Posterior cingulate gyrus (tissue), 11 donors: ENCODE measurements at regions of chr5 and their contacts with region 1.

Region 1: GRCh38 chr5:143403593-143404415 is at the start of gene NR3C1:
- DNase-seq: peak; percentile 67 to 97 (median 80)

Region 2: GRCh38 chr5:142922223-142922952 is 481.4 kb before region 1 on chr5:
- intact Hi-C with region 1: loop called (anchors 5 kb)
- DNase-seq: no peak

Region 3: DNA sequence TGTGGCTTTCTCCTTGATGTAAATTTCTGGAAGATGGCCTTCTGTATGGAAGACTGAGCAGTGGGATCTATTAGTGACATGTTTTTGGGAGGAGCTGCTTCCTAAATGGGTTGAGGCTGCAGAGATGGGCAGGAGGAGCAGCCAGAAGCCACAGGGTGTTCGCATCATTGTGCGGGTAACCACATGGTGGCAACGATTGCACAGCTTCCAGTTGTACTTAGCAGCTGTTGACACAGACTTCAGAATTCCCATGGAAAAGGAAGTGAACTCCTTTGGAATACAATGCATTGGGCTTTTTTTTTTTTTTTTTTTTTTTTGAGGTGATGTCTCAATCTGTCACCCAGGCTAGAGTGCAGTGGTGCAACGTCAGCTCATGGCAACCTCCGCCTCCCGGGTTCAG is 297.6 kb before region 1 on chr5:
- intact Hi-C with region 1: loop called (anchors 10 kb)
- DNase-seq: peak in 7 of 10 donors; percentile 35 to 86 (median 56)

Region 4: DNA sequence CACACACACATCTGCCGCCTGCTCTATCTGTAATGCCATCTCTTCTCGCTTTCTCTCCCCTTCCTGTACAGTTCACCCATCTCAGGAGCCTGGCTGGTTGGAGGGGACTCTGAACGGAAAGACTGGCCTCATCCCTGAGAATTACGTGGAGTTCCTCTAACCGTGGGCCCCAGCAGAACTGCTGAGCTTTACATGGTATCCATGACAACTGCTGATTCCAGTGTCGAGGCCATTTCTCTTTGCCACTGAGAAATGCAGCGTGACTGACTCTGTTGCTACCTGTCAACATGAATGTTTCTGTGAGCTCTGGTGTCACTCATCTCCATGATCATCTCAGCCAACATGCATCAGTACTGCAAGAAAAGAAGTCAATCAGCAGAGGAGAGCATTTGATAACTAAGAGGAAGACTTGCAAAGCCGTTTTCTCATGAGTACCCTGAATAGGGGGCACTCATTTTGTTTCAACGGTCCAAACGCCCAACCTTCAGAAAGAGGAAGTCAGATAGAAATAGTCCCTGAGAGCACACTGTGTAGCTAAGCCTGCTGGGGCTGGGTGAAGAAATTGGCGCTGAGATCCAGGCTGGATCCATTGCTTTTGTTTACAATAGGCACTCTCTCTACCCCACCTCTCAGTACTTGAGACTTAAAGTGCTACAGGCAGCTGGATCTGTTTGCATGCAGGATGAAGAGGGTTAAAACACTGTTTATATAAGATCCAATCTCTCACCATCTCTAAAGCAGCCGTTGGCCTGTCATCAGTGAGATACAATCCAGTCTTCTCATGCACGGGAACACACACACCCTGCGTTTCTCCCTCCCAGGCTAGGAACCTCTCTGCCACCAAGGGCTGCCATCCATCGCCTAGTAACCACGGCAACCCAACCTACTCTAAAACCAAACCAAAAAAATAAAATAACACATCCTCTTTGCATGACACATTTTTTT is 181.2 kb before region 1 on chr5:
- intact Hi-C with region 1: loop called (anchors 5 kb)
- DNase-seq: peak in 7 of 10 donors; percentile 37 to 93 (median 56)